ENCODE measurements at regions of chr1 and their contacts with region 1.

Region 1: GRCh38 chr1:38512789-38513188 is 346.8 kb downstream of the RRAGC start:
- H3K4me3 ChIP-seq: no peak overlapping the region
- H3K27ac ChIP-seq: no peak overlapping the region
- H3K4me1 ChIP-seq: peaks cover 14% of the 10 kb centered on the region
- CTCF ChIP-seq: no peak

Region 2: GRCh38 chr1:38489844-38490270 is 22.9 kb before region 1 on chr1:
- CTCF ChIA-PET with region 1: interaction called, 10 read pairs
- POLR2A ChIA-PET with region 1: no interaction called
- H3K4me3 ChIP-seq: no peak overlapping the region
- H3K27ac ChIP-seq: no peak overlapping the region
- H3K4me1 ChIP-seq: no peaks in the 10 kb centered on the region
- CTCF ChIP-seq: no peak

Measured in HEK293 (cell line).